AG04450 (cell line): ENCODE measurements at regions of chr4 and their contacts with region 1.

Region 1: DNA sequence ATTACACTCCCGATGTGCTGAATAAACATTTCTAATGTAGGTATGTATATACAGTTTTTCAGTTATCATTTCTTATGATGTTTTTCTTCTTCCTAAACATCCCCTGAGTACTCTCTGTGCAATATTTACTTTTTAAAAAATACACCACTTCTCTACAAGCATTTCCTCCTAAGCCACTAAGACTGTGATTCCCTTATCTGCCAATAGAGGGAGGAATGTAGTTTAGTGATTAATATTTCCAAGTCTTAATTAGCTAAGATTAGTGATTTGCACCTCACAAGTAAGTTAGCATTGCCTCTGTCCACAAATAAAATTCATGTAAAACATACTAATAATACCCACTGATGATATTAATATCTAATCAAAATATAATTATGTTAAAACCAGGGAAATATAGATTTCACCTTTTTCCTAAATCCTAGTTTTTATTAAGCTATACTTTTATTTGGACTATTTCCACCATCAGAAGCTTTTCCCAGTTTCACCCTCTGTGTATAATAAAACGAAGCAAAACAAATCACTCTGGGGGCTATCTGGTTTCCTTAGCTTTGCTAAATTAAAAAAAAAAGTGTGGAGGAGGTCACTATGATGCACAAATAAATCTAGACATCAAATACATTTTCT is 909.1 kb downstream of the FAT4 start:
- DNase-seq: no peak
- H3K4me3 ChIP-seq: no peak overlapping the region
- H3K27ac ChIP-seq: no peak overlapping the region
- H3K27me3 ChIP-seq: no peaks in the 10 kb centered on the region
- CTCF ChIP-seq: peak; percentile 80

Region 2: GRCh38 chr4:126238013-126238412 is 14.1 kb after region 1 on chr4:
- CTCF ChIA-PET with region 1: interaction called, 15 read pairs
- POLR2A ChIA-PET with region 1: no interaction called
- DNase-seq: no peak
- H3K4me3 ChIP-seq: no peak overlapping the region
- H3K27ac ChIP-seq: no peak overlapping the region
- H3K27me3 ChIP-seq: no peaks in the 10 kb centered on the region
- CTCF ChIP-seq: no peak

Region 3: DNA sequence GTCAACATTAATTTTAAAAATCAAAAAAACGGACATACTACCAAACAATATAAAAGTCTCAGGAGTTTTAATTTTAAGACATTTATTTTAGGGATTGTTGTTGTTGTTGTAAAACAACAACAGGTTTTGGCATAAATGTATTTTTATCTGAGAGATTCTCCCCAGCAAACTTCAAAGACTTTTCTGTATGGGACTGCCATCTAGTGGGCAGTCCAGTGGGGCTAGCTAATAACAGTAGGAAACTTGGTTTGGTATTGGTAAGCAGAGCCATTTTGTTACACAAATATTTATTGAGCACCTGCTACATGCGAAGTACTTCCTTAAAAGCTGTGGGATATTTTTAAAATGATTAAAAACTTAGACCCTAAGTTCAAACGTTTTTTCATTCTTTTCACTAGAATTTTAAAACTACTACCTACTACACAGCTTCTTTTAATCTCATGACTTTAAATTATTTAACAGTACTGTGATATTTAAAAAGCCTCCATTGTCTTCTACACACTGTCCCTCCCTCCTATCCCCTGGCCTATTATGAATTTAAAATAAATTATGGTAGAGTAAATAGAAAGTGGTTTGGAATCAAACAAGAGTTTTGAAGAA is 380.5 kb after region 1 on chr4:
- CTCF ChIA-PET with region 1: interaction called, 18 read pairs
- POLR2A ChIA-PET with region 1: no interaction called
- DNase-seq: peak; percentile 21
- H3K4me3 ChIP-seq: no peak overlapping the region
- H3K27ac ChIP-seq: no peak overlapping the region
- H3K27me3 ChIP-seq: no peaks in the 10 kb centered on the region
- CTCF ChIP-seq: peak; percentile 90